Activated naive CD4-positive, alpha-beta T cell treated with anti-CD3 and anti-CD28 coated beads for 36 hours (primary cell): ENCODE measurements at regions of chr18 and their contacts with region 1.

Region 1: DNA sequence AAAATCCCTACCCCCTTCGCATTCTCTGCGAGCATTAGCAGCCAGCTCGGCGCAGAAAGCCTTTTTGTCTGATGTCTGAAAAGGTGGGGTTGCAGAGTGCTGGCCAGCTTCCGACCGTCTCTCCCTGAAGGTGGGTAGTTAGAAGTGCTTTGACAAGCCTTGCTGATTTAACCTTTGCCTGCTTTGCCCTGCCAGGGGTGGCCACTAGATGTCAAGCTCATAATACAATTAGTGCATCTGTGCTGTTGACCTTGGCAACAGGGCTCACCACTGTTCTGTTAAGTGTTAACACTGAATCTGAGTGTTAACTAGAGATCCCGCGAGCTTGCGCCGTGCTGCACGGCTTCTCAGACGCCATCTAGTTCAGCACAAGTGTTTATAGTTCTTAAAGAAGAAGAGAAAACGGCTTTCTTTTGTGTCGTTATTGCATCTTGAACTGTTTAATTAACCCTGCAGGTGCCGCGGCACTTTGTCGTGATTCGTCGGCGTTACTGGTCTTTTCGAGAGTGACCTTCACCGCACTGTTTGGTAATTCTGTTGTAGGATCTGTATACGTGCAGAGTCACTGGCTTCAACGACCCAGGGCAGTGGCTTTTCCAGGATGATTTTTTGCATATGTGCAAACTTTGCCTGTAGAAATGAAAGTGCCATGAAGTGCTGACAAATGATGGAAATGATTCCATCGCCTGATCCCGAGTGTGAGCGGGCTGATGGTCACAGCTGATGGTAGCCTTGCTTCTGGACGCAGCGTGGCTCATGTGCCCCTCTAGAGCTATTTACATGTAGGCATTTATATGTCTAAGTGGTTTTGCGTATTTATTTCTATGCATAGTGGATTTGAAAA is 5.5 kb downstream of the SALL3 start:
- DNase-seq: peak; percentile 45
- H3K4me3 Mint-ChIP-seq: no peak overlapping the region
- H3K27ac Mint-ChIP-seq: no peak overlapping the region
- H3K4me1 Mint-ChIP-seq: peaks cover 17% of the 10 kb centered on the region
- H3K27me3 Mint-ChIP-seq: peaks cover 57% of the 10 kb centered on the region

Region 2: GRCh38 chr18:77765468-77765867 is 1219.7 kb before region 1 on chr18:
- CTCF ChIA-PET with region 1: no interaction called
- intact Hi-C with region 1: loop called (anchors 10 kb)
- DNase-seq: peak; percentile 49
- H3K4me3 Mint-ChIP-seq: no peak overlapping the region
- H3K27ac Mint-ChIP-seq: no peak overlapping the region
- H3K4me1 Mint-ChIP-seq: no peaks in the 10 kb centered on the region
- H3K27me3 Mint-ChIP-seq: peaks cover 16% of the 10 kb centered on the region

Region 3: DNA sequence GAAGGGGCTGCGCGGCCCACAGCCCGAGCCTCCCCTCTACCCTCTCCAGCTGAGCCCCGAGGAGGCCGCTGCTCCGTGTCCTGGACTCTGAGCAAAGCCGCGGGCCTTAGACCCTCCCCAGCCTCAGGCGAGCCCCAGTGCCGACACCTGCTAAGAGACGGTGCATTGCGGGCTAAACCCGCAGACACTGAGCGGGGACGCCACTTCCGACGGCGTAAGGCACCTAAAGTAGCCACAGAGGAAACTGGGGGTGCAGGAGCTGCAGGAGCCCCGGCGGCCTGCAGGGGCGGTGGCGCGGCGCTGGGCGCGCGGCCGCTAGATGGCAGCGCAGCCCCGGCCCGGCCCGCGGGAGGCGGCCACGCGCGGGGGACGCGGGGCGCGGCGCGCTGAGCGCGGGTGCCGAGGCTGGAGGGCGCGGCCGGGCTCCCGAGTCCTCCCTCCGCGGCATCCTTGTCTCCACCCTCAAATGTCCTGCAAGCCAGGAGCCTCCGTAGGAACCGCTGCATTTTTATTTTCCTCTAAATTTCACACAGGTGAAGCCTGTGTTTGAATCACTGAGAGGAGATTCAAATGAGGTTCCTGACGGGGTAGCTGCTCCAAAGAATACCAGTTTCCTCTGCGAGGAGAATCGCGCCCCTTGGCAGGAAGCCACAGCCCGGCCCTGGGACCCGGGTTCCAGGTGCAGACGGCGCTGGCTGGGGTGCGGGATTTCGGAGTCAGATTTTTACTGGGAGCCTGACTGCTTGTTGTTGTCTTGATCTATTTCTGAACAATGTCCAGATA is 1085.0 kb before region 1 on chr18:
- CTCF ChIA-PET with region 1: no interaction called
- intact Hi-C with region 1: loop called (anchors 10 kb)
- DNase-seq: peak; percentile 59
- H3K4me3 Mint-ChIP-seq: peak overlapping the region; percentile 53
- H3K27ac Mint-ChIP-seq: no peak overlapping the region
- H3K4me1 Mint-ChIP-seq: peaks cover 5% of the 10 kb centered on the region
- H3K27me3 Mint-ChIP-seq: peaks cover 8% of the 10 kb centered on the region

Region 4: GRCh38 chr18:78659748-78660147 is 325.4 kb before region 1 on chr18:
- CTCF ChIA-PET with region 1: no interaction called
- intact Hi-C with region 1: loop called (anchors 5 kb)
- DNase-seq: peak; percentile 13
- H3K4me3 Mint-ChIP-seq: no peak overlapping the region
- H3K27ac Mint-ChIP-seq: no peak overlapping the region
- H3K4me1 Mint-ChIP-seq: no peaks in the 10 kb centered on the region
- H3K27me3 Mint-ChIP-seq: no peaks in the 10 kb centered on the region

Region 5: GRCh38 chr18:78875268-78875997 is 109.7 kb before region 1 on chr18:
- CTCF ChIA-PET with region 1: interaction called, 4 read pairs
- intact Hi-C with region 1: loop called (anchors 1 kb)
- DNase-seq: peak; percentile 62
- H3K4me3 Mint-ChIP-seq: no peak overlapping the region
- H3K27ac Mint-ChIP-seq: no peak overlapping the region
- H3K4me1 Mint-ChIP-seq: no peaks in the 10 kb centered on the region
- H3K27me3 Mint-ChIP-seq: peaks cover 10% of the 10 kb centered on the region

Region 6: DNA sequence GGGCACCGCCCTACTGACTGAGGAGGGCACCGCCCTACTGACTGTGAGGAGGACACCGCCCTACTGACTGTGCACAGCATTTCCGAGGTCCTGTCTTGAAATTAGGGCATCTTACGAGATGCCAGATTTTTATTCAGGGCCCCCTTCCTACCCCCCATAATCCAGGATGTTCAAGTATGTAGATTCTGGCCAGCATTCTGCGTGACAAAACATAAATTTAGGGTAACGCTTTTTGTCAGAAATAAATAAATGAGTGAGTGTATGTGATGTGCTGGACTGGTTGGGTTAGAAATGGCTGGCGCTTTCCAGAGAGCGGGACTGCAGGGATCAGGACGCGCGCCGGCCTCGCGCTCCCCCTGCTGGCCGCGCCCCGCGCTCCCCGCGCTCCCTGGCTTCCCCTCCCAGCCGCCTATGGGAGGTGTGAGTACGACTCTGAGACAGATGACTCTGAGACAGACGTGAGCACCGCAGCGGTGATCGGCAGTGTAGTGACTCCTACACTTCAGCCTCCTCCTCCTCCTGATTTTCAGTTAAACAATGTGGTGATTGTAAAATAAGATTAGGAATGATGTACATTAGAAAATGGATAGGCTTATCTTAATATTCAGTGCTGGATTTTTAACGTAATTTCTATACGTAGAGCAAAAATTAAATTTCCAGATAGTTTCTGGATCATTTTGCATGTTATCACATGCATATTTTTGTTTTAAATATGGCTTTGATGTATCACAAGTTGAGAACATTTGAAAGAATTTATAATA is 261.4 kb after region 1 on chr18:
- CTCF ChIA-PET with region 1: interaction called, 5 read pairs
- intact Hi-C with region 1: loop called (anchors 1 kb)
- DNase-seq: peak; percentile 84
- H3K4me3 Mint-ChIP-seq: no peak overlapping the region
- H3K27ac Mint-ChIP-seq: no peak overlapping the region
- H3K4me1 Mint-ChIP-seq: peaks cover 9% of the 10 kb centered on the region
- H3K27me3 Mint-ChIP-seq: no peaks in the 10 kb centered on the region